GM12878 (cell line): ENCODE measurements at regions of chr1 and their contacts with region 1.

Region 1: DNA sequence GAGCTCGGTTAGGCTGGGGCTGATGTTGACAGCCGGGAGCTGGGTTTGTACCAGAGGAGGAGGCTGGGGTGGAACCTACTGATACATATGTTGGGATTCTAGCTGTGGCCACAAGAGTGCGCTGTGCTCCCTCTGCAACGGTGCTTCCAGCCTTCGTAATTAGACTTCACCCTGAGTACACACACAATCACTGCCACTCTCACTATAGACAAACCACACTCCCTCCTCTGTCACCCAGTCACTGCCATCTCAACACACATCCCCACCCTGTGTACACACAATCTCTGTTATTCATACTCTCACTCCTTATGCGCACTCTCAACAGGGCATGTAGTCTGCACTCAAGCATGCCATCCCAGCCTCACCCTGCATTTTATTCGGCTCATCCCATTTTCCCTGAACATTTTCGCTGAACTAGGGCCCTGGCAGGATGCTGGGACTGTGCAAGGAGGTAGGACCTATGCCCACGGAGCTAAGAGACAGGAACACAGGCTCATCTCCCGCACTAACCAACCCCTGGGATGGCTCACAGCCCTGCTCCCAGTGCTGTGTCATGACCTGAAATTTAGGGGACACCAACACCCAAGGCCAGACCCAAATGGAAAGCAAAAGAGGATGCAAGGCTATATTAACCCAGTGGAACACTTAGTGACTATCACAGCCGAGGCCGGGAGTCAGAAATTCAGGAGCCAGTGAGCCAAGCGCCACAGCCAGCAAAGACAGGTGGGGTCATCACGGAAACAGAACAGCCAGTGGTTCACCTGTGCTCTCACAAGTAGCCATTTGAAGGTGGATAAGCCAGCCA is 5.7 kb downstream of the GJB3 start:
- DNase-seq: peak; percentile 25
- ATAC-seq: peak; percentile 96
- H3K4me3 ChIP-seq: no peak overlapping the region
- H3K27ac ChIP-seq: no peak overlapping the region
- H3K4me1 ChIP-seq: no peaks in the 10 kb centered on the region; the same call in 1 of the 2 replicates
- H3K27me3 ChIP-seq: 0 out of 4 replicates have a peak, but pooled peaks cover 0 to 4% of the 10 kb centered on the region in 2 experiments
- CTCF ChIP-seq: peak; percentile 85 to 96 (median 88); a peak in 5 of 6 replicates
- EP300 ChIP-seq: no peak
- POLR2A ChIP-seq: no peak
- RAD21 ChIP-seq: peak; percentile 71

Region 2: DNA sequence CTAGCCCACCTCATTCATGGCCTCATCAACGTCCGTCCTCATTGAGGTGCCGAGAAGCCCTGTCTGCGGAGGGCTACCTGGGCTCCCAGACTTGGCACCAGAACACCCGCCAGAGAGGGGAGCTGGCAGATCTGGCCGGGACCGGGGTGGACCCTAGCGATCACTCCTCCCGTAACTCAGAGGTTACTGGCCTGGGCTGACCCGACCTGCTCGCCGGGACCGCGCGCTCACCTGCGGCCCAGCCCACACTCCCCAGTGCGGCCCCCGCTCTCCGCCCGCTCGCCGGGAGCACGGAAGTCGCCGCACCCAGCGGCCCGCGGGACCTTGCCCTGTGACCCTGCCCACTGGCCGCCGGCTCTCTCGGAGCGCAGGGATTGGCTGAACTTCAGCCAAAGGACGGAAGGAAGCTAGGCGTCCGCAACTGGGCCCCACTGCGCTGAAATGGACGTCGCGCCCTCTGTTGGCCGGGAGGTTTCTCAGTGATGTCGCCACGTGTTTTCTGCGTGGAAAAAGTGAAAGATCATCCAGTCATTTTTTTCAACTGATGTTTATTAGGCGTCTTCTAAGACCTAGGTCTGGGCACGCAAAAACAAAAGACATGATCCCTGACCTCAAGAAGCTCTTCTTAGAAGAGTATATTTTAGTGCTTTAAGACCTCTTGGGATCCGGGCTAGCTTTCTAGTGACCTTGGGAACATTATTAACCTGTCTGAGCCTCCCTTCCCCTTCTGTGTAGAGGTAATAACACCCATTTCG is 72.9 kb after region 1 on chr1 and contains the start of gene SMIM12:
- CTCF ChIA-PET with region 1: interaction called, 30 read pairs
- POLR2A ChIA-PET with region 1: no interaction called
- RAD21 ChIA-PET with region 1: interaction called, 4 read pairs
- SMC1A ChIA-PET with region 1: interaction called, 5 read pairs
- in situ Hi-C with region 1: loop called (anchors 5 kb)
- intact Hi-C with region 1: no loop called
- DNase-seq: peak; percentile 62
- ATAC-seq: peak; percentile 100
- H3K4me3 ChIP-seq: peak within 1 kb of the TSS; percentile 96
- H3K27ac ChIP-seq: peak within 1 kb of the TSS; percentile 81
- H3K4me1 ChIP-seq: no peaks in the 10 kb centered on the region
- H3K27me3 ChIP-seq: no peaks in the 10 kb centered on the region
- CTCF ChIP-seq: peak; percentile 84 to 93 (median 92)
- EP300 ChIP-seq: peak in 1 of 2 experiments; percentile 30; a peak in 1 of 4 replicates
- POLR2A ChIP-seq: peak; percentile 100
- RAD21 ChIP-seq: no peak
- polyA plus RNA-seq, gene SMIM12: 26.1 to 42.9 TPM

Region 3: DNA sequence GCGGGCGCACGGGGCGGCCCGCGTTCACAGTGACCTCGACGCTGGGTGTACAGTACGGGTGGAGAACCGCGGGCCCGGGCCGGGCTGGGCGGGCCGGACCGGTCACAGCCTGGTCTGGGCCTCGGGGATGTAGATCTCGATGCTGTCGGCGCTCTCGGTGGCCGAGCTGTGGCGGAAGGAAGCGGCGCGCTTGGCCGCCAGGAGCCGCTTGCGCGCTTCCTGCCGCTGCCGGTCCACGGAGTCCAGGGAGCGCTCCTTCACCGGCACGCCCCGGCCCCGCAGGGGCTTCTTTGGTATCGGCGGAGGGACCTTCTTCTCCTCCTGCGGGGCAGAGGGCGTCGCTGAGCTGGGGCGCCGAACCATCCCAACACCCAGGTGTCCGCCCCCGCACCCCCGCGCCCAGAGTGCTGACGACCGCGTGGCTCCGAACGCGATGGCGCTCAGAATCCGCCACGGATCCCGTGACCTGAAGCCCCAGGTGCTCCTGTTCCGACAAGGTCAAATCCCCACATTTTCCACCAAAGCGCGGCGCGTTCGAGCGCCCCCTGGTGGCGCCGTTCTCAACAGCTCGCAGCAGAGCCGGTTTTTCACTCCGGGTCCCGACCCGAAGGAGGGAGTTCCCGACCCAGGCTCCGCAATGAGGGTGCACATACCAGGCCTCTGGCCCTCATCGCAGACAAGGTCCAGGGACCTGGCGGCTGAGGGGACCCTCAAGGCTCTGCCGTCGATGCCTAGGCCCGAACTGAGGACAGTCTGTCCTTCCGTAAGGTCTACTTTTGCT is 79.4 kb after region 1 on chr1:
- CTCF ChIA-PET with region 1: interaction called, 16 read pairs
- POLR2A ChIA-PET with region 1: no interaction called
- RAD21 ChIA-PET with region 1: no interaction called
- SMC1A ChIA-PET with region 1: interaction called, 5 read pairs
- in situ Hi-C with region 1: no loop called
- intact Hi-C with region 1: loop called (anchors 1 kb)
- DNase-seq: peak; percentile 52
- ATAC-seq: peak; percentile 89
- H3K4me3 ChIP-seq: peak overlapping the region; percentile 61
- H3K27ac ChIP-seq: peak overlapping the region; percentile 67
- H3K4me1 ChIP-seq: peaks cover 4% of the 10 kb centered on the region; the same call in 1 of the 2 replicates
- H3K27me3 ChIP-seq: peaks cover 0 to 2% of the 10 kb centered on the region in 2 experiments; a peak in 1 of 4 replicates
- CTCF ChIP-seq: peak; percentile 92 to 96 (median 95)
- EP300 ChIP-seq: no peak
- POLR2A ChIP-seq: peak; percentile 83
- RAD21 ChIP-seq: peak; percentile 38; the same call in 1 of the 2 replicates

Region 4: DNA sequence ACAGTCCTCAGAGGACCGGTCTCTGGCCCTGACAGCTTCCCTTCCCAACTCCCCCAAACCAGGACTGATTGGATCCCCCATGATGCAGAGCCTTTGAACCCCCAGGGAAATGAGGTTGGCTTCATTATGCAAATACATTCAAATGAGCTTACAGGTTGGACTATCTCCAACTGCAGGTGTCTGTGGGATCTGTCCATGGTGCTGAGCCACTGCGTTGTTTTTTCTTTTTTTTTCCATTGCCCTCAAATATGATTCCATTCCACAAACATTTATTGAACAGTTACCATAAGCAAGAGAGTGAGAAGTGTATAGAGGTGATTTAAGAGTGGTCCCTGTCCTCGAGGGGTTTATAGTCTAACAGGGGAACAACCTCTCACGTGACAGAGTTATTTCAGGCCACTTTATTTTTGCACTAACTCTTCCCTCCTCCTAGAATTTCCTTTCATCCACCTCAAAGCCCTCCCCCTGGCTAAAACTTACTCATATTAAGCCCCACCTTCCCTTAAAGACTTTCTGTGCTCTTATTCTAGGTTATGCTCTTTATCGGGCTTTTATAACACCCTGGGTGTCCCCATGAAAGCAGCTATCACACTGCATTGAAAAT is 120.9 kb after region 1 on chr1:
- CTCF ChIA-PET with region 1: no interaction called
- POLR2A ChIA-PET with region 1: no interaction called
- RAD21 ChIA-PET with region 1: no interaction called
- SMC1A ChIA-PET with region 1: no interaction called
- in situ Hi-C with region 1: no loop called
- intact Hi-C with region 1: no loop called
- DNase-seq: no peak
- ATAC-seq: no peak
- H3K4me3 ChIP-seq: no peak overlapping the region
- H3K27ac ChIP-seq: no peak overlapping the region
- H3K4me1 ChIP-seq: no peaks in the 10 kb centered on the region
- H3K27me3 ChIP-seq: no peaks in the 10 kb centered on the region; a peak in 1 of 4 replicates
- CTCF ChIP-seq: no peak
- EP300 ChIP-seq: no peak
- POLR2A ChIP-seq: no peak
- RAD21 ChIP-seq: no peak